ENCODE measurements at regions of chr17 and their contacts with region 1.

Region 1: GRCh38 chr17:34199932-34200534 is 55.1 kb upstream of the CCL2 start:
- DNase-seq: peak; percentile 73
- H3K4me3 Mint-ChIP-seq: no peak overlapping the region
- H3K27ac Mint-ChIP-seq: no peak overlapping the region
- H3K4me1 Mint-ChIP-seq: peaks cover 9% of the 10 kb centered on the region
- H3K27me3 Mint-ChIP-seq: peaks cover 44% of the 10 kb centered on the region

Region 2: GRCh38 chr17:34171245-34171818 is 28.7 kb before region 1 on chr17:
- CTCF ChIA-PET with region 1: interaction called, 17 read pairs
- POLR2A ChIA-PET with region 1: no interaction called
- intact Hi-C with region 1: no loop called
- DNase-seq: peak; percentile 66
- H3K4me3 Mint-ChIP-seq: no peak overlapping the region
- H3K27ac Mint-ChIP-seq: no peak overlapping the region
- H3K4me1 Mint-ChIP-seq: no peaks in the 10 kb centered on the region
- H3K27me3 Mint-ChIP-seq: peaks cover 9% of the 10 kb centered on the region

Region 3: DNA sequence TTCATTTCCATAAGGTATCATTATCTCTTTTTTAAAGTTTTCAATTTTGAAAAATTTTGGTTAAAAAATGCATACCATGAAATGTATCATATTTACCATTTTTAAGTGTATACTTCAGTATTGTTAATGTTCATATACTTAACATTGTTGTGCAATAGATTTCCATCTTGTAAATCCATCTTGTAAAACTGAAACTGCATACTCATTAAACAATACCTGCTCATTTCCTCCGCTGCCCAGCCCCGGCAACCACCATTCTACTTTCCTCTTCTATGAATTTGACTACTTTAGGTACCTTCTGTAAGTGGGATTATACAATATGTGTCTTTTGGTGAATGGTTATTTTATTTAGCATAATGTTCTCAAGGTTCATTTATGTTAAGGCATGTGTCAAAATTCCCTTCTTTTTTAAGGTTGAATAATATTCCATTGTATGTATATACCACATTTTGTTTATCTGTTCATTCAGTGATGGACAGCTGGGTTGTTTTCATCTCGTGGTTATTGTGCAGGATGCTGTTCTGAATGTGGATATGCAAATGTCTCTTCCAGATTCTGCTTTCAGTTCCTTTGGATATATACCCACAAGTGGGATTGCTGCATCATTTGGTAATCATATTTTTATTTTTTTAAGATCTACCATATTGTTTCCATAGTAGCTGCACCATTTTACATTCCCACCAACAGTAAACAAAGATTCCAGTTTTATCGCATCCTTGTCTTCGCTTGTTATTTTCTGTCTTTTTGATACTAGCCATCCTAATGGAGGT is 61.7 kb after region 1 on chr17:
- CTCF ChIA-PET with region 1: no interaction called
- POLR2A ChIA-PET with region 1: no interaction called
- intact Hi-C with region 1: loop called (anchors 5 kb)
- DNase-seq: peak; percentile 46
- H3K4me3 Mint-ChIP-seq: no peak overlapping the region
- H3K27ac Mint-ChIP-seq: no peak overlapping the region
- H3K4me1 Mint-ChIP-seq: no peaks in the 10 kb centered on the region
- H3K27me3 Mint-ChIP-seq: peaks cover 53% of the 10 kb centered on the region

Region 4: DNA sequence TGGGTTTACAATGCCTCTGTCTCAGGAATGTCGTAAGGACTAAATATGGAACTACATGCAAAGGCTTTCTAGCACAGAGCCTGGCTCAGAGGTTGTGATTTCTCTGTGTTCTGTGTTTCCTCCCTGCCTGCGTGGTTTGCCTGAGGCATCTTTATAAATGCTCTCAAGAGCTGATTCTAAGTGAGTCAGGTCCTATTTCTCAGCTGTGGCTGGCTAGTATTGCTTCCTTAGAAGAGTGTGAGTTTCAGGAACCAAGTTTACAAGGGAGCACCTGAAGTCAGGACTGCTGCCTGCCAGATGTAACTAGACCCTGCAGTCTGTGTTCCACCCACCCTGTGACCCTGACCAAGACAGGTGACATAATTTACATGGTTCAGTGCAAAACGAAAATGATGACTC is 171.0 kb after region 1 on chr17:
- CTCF ChIA-PET with region 1: interaction called, 15 read pairs
- POLR2A ChIA-PET with region 1: no interaction called
- intact Hi-C with region 1: no loop called
- DNase-seq: peak; percentile 19
- H3K4me3 Mint-ChIP-seq: no peak overlapping the region
- H3K27ac Mint-ChIP-seq: no peak overlapping the region
- H3K4me1 Mint-ChIP-seq: peaks cover 7% of the 10 kb centered on the region
- H3K27me3 Mint-ChIP-seq: peaks cover 5% of the 10 kb centered on the region

Region 5: DNA sequence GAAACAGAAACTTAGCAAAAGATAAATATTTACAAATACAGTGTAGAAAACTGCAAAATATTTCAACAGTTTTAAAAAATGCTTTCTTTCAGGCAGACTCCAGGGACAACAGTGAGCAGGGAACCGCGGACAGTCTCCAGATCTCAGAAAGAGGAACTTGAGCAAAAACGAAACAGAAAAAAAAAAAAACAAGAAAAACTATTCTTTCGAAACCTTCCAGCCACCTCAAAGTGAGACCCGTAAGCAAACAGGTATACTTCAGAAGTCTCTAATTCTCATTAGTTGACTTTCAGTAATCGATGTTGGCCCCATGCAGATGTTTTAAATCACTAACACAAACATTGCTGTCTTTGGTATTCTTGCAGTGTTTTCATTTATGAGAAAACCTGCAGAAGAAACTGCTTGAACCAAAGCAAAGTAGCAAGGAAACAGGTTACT is 178.7 kb after region 1 on chr17:
- CTCF ChIA-PET with region 1: interaction called, 13 read pairs
- POLR2A ChIA-PET with region 1: no interaction called
- intact Hi-C with region 1: loop called (anchors 1 kb)
- DNase-seq: peak; percentile 43
- H3K4me3 Mint-ChIP-seq: no peak overlapping the region
- H3K27ac Mint-ChIP-seq: no peak overlapping the region
- H3K4me1 Mint-ChIP-seq: peaks cover 50% of the 10 kb centered on the region
- H3K27me3 Mint-ChIP-seq: peaks cover 26% of the 10 kb centered on the region

Region 6: GRCh38 chr17:34420254-34420766 is 220.3 kb after region 1 on chr17:
- CTCF ChIA-PET with region 1: interaction called, 16 read pairs
- POLR2A ChIA-PET with region 1: no interaction called
- intact Hi-C with region 1: no loop called
- DNase-seq: peak; percentile 73
- H3K4me3 Mint-ChIP-seq: no peak overlapping the region
- H3K27ac Mint-ChIP-seq: no peak overlapping the region
- H3K4me1 Mint-ChIP-seq: peaks cover 3% of the 10 kb centered on the region
- H3K27me3 Mint-ChIP-seq: peaks cover 25% of the 10 kb centered on the region

Measured in activated CD4-positive, alpha-beta memory T cell treated with anti-CD3 and anti-CD28 coated beads for 36 hours (primary cell).